Sciatic nerve (tissue), 2 donors: ENCODE measurements at regions of chr3 and their contacts with region 1.

Region 1: DNA sequence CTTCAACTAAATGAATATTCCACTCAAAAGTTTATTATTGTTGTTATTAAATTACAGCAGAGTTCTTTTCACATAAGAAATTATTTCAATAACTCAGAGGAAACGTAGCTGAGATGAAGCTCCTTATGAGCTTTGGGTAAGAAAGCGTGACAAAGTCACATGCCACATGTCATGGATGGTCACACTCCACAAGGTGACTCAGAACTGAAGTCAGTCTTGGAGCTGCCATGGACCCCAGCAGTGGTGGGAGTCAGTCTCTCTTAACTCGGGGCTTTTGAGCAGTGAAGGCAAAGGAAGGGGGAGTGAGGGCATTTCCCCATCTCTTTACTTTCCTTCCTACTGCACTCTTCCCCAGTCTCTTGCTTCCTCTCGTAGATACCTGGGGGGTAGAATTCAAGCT is 87.5 kb upstream of the FAM3D start:
- DNase-seq: no peak
- ATAC-seq: no peak

Region 2: DNA sequence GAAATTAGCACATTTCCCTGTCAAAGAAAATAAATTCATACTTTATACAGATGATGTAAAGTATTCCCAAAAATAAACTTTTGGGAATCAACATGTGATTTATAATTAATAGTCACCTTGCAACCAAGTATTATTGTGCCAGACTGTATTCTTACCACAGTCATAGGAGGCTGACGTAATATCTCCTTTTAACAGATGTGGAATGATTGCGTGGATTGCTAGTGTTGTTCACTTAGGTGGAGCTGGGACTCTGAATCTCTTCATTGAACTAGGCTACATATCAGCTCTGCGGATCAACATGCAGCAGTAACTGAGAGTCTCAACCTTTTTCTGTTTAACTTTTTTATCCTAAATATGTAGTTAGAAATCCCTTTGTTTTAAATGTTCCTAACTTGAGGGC is 384.2 kb before region 1 on chr3:
- intact Hi-C with region 1: loop called (anchors 5 kb)
- DNase-seq: no peak
- ATAC-seq: no peak